Colonic mucosa (tissue), 4 donors: ENCODE measurements at regions of chr22 and their contacts with region 1.

Region 1: GRCh38 chr22:20916983-20917810 is at the start of gene CRKL:
- DNase-seq: peak; percentile 96
- H3K4me3 ChIP-seq: peak within 1 kb of the TSS; percentile 85
- H3K27ac ChIP-seq: peak within 1 kb of the TSS; percentile 95
- H3K4me1 ChIP-seq: peaks cover 9% of the 10 kb centered on the region
- H3K27me3 ChIP-seq: no peaks in the 10 kb centered on the region
- CTCF ChIP-seq: peak; percentile 97
- total RNA-seq, gene CRKL: 63.6 to 82.5 TPM

Region 2: DNA sequence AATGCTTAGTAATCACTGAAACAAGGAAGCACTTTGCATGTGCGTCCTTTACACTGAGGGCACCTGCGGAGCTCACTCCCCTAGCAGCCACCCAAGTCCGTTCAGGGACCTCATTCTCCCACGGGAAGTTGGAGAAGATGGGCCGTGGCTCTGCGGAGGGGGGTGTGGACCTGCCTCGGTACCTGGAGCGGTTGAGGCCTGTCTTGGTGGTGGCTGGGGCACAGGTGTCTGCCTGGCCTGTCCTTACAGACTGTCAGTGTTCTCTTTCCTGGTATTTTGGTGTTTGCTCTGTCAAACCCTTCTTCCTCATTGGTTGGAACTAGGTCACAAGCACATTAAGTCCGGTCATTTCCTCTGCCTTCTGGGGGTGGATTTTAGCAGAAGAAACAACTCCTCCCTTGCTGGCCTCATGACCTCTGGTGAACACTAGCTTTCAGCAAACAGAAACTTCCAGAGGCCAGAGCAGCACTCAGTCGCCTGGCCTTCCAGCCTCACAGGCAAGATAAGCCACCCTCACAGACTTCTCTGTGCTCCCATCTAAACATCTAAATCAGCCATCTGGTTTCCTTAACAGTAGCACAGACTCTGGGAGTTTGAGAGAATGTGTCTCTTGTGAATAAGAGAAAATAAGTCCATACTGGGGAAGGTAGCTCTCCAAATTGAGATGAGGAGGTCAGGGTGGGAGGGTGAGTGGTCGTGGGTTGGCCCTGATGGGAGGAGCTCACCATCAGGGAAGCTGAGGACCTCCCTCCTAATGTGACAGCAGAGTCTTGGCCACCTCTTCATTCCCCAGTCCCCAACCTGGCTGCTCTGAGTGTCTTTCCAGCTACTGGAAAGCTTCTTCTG is 49.8 kb before region 1 on chr22:
- intact Hi-C with region 1: loop called (anchors 10 kb)
- DNase-seq: peak; percentile 85
- H3K4me3 ChIP-seq: no peak overlapping the region
- H3K27ac ChIP-seq: peak overlapping the region; percentile 87
- H3K4me1 ChIP-seq: peaks cover 17% of the 10 kb centered on the region
- H3K27me3 ChIP-seq: no peaks in the 10 kb centered on the region
- CTCF ChIP-seq: no peak

Region 3: GRCh38 chr22:20953668-20954500 is 36.7 kb after region 1 on chr22:
- intact Hi-C with region 1: loop called (anchors 5 kb)
- DNase-seq: no peak
- H3K4me3 ChIP-seq: no peak overlapping the region
- H3K27ac ChIP-seq: peak overlapping the region; percentile 78
- H3K4me1 ChIP-seq: peaks cover 17% of the 10 kb centered on the region
- H3K27me3 ChIP-seq: no peaks in the 10 kb centered on the region
- CTCF ChIP-seq: no peak